ENCODE measurements at regions of chr11 and their contacts with region 1.

Region 1: GRCh38 chr11:11813288-11813962 is 28.3 kb upstream of the USP47 start:
- DNase-seq: no peak
- CTCF ChIP-seq: no peak

Region 2: GRCh38 chr11:11722861-11723260 is 90.6 kb before region 1 on chr11:
- in situ Hi-C with region 1: no loop called
- DNase-seq: no peak
- CTCF ChIP-seq: no peak

Region 3: DNA sequence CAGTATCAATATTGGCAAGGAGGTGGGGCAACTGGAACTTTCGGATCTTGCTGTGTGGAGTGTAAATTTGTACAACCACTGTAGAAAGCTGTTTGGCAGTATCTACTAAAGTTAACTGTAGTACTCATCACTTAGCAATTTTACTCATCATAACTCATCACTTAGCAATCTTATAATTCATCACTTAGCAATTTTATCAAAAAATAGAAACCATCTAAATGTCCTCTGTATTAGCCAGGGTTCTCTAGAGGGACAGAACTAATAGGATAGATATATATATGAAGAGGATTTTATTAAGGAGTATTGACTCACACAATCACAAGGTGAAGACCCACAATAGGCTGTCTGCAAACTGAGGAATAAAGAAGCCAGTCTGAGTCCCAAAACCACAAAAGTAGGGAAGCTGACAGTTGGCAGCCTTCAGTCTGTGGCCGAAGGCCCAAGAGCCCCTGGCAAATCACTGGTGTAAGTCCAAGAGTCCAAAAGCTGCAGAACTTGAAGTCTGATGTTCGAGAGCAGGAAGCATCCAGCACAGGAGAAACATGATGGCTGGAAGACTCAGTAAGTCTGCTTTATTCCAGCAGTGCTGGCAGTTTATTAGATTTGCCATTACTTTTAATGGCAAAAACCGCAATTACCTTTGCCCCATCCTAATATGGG is 64.6 kb before region 1 on chr11:
- in situ Hi-C with region 1: no loop called
- DNase-seq: no peak
- CTCF ChIP-seq: no peak

Region 4: DNA sequence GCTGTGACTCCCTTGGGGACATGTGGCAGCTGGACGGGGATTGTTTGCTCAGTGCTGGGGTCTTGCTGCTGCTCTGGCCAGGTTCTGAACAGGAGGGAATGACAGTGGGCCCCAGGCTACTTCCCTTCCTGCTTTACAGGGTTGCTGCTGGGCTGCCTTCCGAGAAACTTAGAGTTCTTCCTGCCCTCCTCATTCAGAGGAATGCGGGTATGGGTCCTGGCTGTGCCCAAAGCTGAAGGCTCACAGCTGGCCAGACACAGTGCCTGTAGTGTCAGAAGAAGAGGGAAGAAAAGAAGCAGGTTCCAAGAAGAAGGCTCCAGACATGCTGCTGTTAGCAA is 455.6 kb after region 1 on chr11:
- in situ Hi-C with region 1: loop called (anchors 25 kb)
- DNase-seq: no peak
- CTCF ChIP-seq: no peak

Measured in GM13976 (cell line).